Activated CD4-positive, alpha-beta memory T cell treated with anti-CD3 and anti-CD28 coated beads for 36 hours (primary cell): ENCODE measurements at regions of chr13 and their contacts with region 1.

Region 1: DNA sequence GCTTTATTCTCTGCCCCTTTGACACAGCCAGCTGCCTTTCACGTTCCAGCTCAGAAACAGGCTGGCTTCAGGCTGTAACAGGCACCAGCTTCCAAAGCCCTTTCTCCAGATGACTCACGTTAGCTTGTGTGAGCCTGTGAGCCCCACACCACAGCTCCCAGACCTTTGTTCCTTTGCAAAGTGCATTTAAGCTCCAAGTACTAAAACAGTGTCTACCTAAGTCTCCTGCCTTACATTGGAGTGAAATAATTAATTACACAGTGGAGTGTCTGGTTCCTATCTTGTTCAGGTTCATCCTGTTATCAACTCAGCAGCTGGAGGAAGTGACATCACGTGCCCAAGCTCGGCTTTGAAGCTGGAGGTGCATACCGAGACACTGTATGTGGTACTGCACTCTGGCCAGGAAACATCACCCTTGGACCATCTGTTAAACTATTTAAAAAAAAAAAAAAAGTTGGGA is 475.8 kb downstream of the FOXO1 start:
- DNase-seq: peak; percentile 79
- H3K4me3 Mint-ChIP-seq: peak overlapping the region; percentile 9
- H3K27ac Mint-ChIP-seq: peak overlapping the region; percentile 85
- H3K4me1 Mint-ChIP-seq: peaks cover 66% of the 10 kb centered on the region
- H3K27me3 Mint-ChIP-seq: no peaks in the 10 kb centered on the region

Region 2: GRCh38 chr13:40069173-40070044 is 121.3 kb before region 1 on chr13:
- CTCF ChIA-PET with region 1: interaction called, 13 read pairs
- POLR2A ChIA-PET with region 1: no interaction called
- intact Hi-C with region 1: no loop called
- DNase-seq: peak; percentile 83
- H3K4me3 Mint-ChIP-seq: no peak overlapping the region
- H3K27ac Mint-ChIP-seq: no peak overlapping the region
- H3K4me1 Mint-ChIP-seq: peaks cover 24% of the 10 kb centered on the region
- H3K27me3 Mint-ChIP-seq: no peaks in the 10 kb centered on the region

Region 3: GRCh38 chr13:40109356-40109844 is 81.3 kb before region 1 on chr13:
- CTCF ChIA-PET with region 1: no interaction called
- POLR2A ChIA-PET with region 1: interaction called, 3 read pairs
- intact Hi-C with region 1: loop called (anchors 1 kb)
- DNase-seq: peak; percentile 51
- H3K4me3 Mint-ChIP-seq: no peak overlapping the region
- H3K27ac Mint-ChIP-seq: peak overlapping the region; percentile 18
- H3K4me1 Mint-ChIP-seq: peaks cover 33% of the 10 kb centered on the region
- H3K27me3 Mint-ChIP-seq: no peaks in the 10 kb centered on the region

Region 4: DNA sequence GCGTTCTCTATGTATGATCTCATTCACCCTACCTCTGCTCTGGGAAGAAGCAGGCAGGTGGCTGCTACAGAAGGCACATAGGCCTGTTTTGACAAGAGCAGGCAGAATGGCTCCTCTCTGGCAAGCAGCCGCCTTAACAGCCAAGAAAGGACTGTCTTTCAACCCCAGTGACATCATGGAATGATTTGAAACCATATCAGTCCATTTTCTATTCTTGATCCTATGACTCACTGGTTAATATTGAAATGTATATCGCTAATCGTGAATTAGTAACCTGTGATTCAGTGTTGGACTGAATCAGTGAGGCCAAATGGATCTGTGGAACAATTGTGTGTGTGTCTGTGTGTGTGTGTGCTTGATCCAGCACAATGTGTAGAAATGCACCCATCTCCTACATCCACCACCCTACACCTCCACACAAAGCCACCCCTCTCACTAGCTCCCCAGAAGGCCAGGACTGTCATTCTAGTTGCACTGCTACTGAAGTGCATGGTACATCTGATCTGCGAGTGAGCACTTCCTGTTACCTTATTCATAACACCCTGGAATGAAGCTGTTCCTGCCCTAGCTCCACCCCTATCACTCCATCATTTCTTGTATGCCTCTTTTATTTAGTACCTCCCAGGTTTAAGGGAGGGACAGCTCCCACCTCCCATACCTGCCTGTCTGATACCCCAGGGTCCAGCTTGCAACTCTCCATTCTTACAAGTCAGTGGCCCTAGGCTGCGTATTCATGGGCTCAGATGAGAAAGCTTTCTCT is 15.8 kb after region 1 on chr13:
- CTCF ChIA-PET with region 1: interaction called, 4 read pairs
- POLR2A ChIA-PET with region 1: interaction called, 14 read pairs
- intact Hi-C with region 1: loop called (anchors 1 kb)
- DNase-seq: peak; percentile 68
- H3K4me3 Mint-ChIP-seq: peak overlapping the region; percentile 60
- H3K27ac Mint-ChIP-seq: peak overlapping the region; percentile 99
- H3K4me1 Mint-ChIP-seq: peaks cover 52% of the 10 kb centered on the region
- H3K27me3 Mint-ChIP-seq: no peaks in the 10 kb centered on the region